Heart right ventricle (tissue), 16 donors: ENCODE measurements at regions of chr10 and their contacts with region 1.

Region 1: GRCh38 chr10:21495752-21496342 is 29.6 kb downstream of the SKIDA1 start:
- DNase-seq: peak; percentile 81 to 89
- ATAC-seq: peak; percentile 82 to 90 (median 88)
- H3K4me3 ChIP-seq: peak overlapping the region; percentile 57 to 89 (median 80)
- H3K27ac ChIP-seq: peak overlapping the region in 9 of 10 donors; percentile 79 to 91 (median 85)
- H3K4me1 ChIP-seq: peaks cover 0 to 51% (median 15%) of the 10 kb centered on the region in 9 donors
- H3K27me3 ChIP-seq: peaks cover 0 to 68% (median 0%) of the 10 kb centered on the region in 7 donors
- CTCF ChIP-seq: peak; percentile 90 to 100 (median 99)

Region 2: GRCh38 chr10:21278491-21279239 is 217.2 kb before region 1 on chr10:
- intact Hi-C with region 1: loop called in 9 of 10 experiments (anchors 1 to 10 kb)
- DNase-seq: peak; percentile 93 to 96
- ATAC-seq: peak; percentile 92 to 99 (median 98)
- H3K4me3 ChIP-seq: no peak overlapping the region
- H3K27ac ChIP-seq: peak overlapping the region in 2 of 10 donors; percentile 17 to 30
- H3K4me1 ChIP-seq: peaks cover 0 to 9% (median 5%) of the 10 kb centered on the region in 9 donors
- H3K27me3 ChIP-seq: no peaks in the 10 kb centered on the region
- CTCF ChIP-seq: peak; percentile 66 to 89 (median 86)

Region 3: DNA sequence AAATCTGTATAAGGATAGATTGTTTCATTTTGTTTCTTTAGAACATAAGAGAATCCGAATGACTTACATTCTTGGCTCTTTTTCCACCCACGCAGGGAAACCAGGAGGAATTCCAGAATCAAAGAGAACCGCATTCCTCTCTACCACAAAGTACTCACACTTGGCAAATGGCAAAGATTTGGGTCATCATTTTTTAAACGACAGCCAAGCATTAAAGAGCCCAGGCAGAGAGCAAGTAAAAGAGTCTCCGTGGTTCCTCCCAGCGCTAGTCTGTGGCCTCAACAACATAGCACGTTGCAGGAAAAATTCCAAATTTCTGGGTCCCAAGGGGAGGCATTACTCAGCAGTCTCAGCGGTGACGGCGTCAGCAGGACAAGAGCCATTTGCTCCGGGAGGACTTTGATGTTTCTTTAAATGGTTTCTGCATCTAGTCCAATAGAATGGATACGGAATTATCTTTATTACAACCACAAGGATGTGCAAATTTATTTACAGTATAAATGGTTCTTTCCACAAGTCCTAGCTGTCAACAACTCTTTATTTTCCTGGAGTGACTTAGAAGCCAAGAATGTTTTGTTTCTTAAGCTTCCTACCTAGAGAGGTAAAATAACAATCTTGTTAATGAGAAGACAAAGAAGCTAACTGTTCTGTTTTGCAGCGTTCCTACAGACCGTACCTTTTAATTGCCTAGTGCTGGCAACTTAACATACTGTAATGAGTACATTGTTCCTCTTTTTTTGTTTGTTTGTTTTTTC is 202.9 kb before region 1 on chr10:
- intact Hi-C with region 1: loop called in 2 of 10 experiments (anchors 5 to 10 kb)
- DNase-seq: peak; percentile 58 to 86
- ATAC-seq: peak; percentile 74 to 96 (median 92)
- H3K4me3 ChIP-seq: peak overlapping the region in 7 of 10 donors; percentile 9 to 47 (median 37)
- H3K27ac ChIP-seq: peak overlapping the region in 9 of 10 donors; percentile 17 to 62 (median 46)
- H3K4me1 ChIP-seq: peaks cover 0 to 26% (median 17%) of the 10 kb centered on the region in 9 donors
- H3K27me3 ChIP-seq: no peaks in the 10 kb centered on the region
- CTCF ChIP-seq: no peak

Region 4: GRCh38 chr10:21399392-21400035 is 96.3 kb before region 1 on chr10:
- intact Hi-C with region 1: no loop called
- DNase-seq: no peak
- ATAC-seq: no peak
- H3K4me3 ChIP-seq: no peak overlapping the region
- H3K27ac ChIP-seq: no peak overlapping the region
- H3K4me1 ChIP-seq: peaks cover 0 to 26% (median 5%) of the 10 kb centered on the region in 9 donors
- H3K27me3 ChIP-seq: no peaks in the 10 kb centered on the region
- CTCF ChIP-seq: no peak

Region 5: DNA sequence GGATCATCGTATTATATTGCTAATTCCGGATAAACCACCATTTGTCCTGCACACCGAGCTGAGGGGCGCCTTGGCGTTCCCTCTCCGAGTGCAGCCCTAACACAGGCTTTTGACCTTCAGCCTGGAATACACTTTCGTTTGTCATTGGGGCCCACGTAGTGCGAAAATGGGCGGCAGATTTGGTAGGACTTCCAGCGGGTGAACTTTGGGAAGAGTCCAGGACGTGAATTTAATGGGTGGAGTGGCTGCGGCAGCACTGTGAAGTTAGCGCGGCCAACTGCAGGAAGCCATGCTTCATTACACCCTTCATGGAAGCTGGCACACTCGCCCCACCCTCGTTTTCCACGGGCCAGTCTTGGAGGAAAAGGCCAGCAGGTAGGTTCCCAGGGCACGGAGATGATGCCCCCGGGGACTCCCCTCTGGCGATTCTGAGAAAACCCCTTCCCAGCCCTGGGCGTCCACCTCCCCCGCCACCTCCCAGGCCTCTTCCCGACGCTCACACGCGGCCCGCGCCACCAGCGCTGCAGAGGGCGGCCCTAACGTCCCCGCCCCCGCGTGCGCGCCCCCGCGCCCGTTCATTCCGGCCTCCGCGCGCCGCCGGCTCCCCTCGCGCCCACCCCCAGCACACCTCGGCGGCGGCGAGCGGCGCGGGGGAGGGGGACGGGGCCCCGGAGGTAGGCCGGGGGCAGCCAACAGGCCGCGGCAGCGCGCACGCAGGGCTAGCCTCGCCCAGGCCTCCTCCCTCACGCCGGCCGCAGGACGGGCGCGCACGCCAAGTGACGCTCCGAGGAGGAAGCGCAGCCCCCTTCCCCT is 37.8 kb after region 1 on chr10 and contains the start of gene MLLT10:
- intact Hi-C with region 1: loop called in 7 of 10 experiments (anchors 5 kb)
- DNase-seq: peak; percentile 94 to 96
- ATAC-seq: peak; percentile 94 to 97 (median 96)
- H3K4me3 ChIP-seq: peak within 1 kb of the TSS; percentile 72 to 88 (median 80)
- H3K27ac ChIP-seq: peak within 1 kb of the TSS; percentile 76 to 99 (median 98)
- H3K4me1 ChIP-seq: peaks cover 0 to 44% (median 27%) of the 10 kb centered on the region in 9 donors
- H3K27me3 ChIP-seq: no peaks in the 10 kb centered on the region
- CTCF ChIP-seq: peak in 5 of 9 donors; percentile 8 to 37 (median 21)
- total RNA-seq, gene MLLT10: 18.9 to 28.4 (median 24.6) TPM

Region 6: GRCh38 chr10:21724695-21725367 is 229.0 kb after region 1 on chr10:
- intact Hi-C with region 1: loop called in 4 of 10 experiments (anchors 2 to 5 kb)
- DNase-seq: peak; percentile 47 to 97
- ATAC-seq: peak; percentile 92 to 98 (median 96)
- H3K4me3 ChIP-seq: no peak overlapping the region
- H3K27ac ChIP-seq: no peak overlapping the region
- H3K4me1 ChIP-seq: peaks cover 0 to 27% (median 20%) of the 10 kb centered on the region in 9 donors
- H3K27me3 ChIP-seq: no peaks in the 10 kb centered on the region
- CTCF ChIP-seq: no peak

Region 7: GRCh38 chr10:21953585-21954057 is 457.8 kb after region 1 on chr10:
- intact Hi-C with region 1: loop called in 6 of 10 experiments (anchors 2 to 10 kb)
- DNase-seq: no peak
- ATAC-seq: peak in 5 of 8 donors; percentile 52 to 72 (median 59)
- H3K4me3 ChIP-seq: no peak overlapping the region
- H3K27ac ChIP-seq: no peak overlapping the region
- H3K4me1 ChIP-seq: peaks cover 0 to 22% (median 13%) of the 10 kb centered on the region in 9 donors
- H3K27me3 ChIP-seq: no peaks in the 10 kb centered on the region
- CTCF ChIP-seq: peak in 8 of 9 donors; percentile 10 to 64 (median 46)